Posterior vena cava (tissue), 2 donors: ENCODE measurements at regions of chr17 and their contacts with region 1.

Region 1: DNA sequence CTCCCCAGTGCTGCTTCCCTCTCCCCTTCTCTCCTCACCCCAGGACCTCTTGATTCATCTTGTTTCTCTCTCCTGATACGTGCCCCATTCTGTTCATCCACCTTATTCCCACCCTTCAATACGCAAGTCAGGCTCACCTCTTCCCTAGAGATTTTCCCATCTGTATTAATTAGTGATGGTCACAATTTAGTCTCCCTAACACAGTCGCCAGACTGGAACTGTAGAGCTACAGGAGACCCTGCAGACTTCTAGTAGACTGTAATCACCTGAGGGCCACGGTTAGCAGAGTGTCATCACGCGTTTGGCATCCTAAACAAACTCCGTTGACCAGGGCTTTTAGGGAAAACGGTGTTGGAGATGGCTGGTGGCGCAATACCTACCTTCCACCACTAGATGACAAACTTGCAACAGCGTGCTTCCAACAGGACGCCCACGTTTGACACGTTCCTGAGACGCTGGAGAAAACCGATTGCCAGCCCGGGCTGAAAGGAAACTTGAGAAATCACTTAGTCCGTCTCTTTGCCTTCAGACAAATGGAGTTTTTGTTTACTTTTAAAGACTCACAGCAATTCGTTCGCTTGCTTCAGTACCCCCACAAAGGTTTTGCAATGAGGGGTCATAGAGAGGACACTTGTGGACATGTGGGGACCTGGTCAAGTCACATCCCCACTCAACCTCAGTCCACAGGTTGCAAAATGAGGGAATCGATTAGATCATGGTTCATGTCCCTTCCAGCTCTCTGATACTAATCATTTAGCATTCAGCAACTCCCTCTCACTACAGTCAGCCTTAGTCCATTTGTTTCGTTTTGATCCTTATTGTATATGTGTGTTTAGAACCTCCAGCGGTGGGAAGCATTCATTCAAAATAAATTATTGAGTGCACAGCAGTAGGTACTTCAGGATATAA is 20.6 kb downstream of the MYL4 start:
- DNase-seq: peak; percentile 94

Region 2: DNA sequence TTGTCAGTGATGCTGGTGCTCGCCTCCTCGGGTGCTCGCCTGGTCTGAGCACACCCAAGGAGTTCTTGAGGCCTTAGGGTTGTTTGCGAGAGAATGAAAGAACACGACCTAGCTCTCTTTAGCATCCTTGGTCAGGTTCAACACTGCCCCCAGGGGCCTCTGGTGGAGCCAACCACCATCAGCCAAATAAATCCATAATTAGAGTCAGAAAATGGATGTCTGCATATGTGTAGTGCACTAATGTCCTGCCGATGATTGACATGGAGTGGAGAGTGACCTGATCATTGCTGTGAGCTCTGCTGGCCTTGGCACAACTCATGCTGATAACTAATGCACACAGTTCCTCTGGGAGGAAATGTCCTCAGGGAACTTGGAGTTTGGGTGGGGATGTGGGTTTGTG is 1238.9 kb before region 1 on chr17:
- intact Hi-C with region 1: no loop called
- DNase-seq: peak; percentile 31

Region 3: DNA sequence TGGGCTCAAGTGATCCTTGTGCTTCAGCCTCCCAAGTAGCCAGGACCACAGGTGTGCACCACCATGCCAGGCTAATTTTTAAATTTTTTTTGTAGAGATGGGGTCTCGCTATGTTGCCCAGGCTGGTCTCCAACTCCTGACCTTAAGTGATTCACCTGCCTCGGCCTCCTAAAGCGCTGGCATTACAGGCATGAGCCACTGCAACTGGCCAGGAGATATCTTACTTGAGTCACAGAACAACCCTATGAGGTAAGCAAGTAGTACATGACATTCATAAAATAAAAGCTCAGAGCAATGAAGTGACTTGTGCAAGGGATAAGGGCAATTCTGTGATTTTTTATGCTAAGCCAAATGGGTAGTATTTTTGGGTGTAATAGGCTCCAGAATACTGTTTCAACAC is 98.0 kb before region 1 on chr17:
- intact Hi-C with region 1: no loop called
- DNase-seq: no peak

Region 4: DNA sequence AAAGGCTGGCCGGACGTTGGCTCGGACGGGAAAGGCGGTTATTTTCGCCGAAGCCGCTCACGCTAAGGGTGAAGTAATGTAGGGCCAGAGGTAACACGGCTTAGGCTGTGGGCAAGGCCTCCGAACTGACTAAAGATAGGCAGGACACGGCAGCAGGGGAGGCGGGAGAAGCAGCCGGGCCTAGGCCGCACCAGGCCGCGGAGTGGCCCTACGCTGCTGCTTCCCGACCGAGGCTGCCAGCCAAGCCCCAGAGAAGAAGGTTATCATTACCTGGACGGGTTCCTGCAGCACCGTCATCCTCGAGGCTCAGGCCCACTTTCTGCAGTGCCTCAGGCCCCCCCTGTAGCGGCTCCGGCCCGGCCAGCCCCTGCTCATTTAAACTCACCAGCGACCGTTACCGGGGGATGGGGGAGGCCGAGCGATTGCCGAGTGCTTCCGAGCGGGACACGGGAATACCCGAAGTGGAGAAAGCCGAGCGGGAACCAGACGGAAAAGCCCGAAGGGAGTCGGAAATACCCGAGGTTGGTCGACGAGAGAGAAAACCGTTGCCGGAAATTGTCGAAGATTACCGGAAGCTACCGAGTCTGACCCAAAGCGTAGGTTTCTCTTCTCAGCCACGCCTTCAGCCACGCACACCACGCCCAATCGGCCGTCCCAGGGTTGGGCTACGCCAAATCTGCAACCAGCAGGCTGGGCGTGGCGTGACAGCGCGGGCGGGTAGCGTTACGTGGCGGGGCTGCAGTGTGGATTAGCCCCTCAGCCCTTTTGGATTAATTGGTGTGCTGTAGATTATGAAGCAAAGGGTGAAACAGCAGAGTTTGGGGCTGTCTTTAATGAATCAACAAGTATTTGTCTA is 40.7 kb before region 1 on chr17 and contains the start of gene CDC27:
- intact Hi-C with region 1: loop called in 1 of 2 experiments (anchors 5 kb)
- DNase-seq: peak; percentile 99
- total RNA-seq, gene CDC27: 82.7 to 103 TPM

Region 5: DNA sequence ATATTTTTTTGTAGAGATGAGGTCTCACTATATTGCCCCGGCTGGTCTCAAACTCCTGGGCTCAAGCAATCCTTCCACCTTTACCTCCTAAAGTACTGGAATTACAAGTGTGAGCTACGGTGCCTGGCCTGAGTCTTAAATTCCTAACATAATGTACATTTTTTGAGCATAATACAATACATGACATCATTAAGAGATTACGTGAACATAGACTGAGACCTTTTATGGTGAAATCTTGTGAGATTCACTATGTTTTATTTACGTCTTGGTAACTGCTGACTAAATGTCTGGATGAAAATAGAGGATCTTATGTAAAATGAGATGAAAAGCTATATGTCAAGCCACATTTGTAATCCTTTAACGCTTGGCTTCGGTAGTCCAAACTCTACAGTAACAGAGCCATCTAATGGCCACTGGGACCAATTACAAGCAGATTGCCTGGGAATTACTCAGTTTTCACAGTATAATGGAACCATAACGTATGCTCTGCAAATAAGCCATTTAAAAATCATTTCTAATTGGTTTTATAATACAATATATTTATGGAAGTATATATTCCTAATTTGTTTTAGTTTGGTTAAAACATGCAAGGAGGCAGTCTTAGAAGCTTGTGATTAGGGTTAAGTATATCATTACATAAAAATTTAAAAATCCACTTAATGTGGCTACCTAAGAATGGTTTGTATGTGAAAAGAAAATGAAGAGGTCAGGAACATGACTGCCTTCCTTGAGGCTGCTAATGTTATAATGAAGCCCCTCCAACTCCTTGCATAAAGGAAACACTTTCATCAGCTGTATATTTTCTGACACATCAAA is 85.9 kb after region 1 on chr17:
- intact Hi-C with region 1: loop called (anchors 2 to 5 kb)
- DNase-seq: no peak

Region 6: DNA sequence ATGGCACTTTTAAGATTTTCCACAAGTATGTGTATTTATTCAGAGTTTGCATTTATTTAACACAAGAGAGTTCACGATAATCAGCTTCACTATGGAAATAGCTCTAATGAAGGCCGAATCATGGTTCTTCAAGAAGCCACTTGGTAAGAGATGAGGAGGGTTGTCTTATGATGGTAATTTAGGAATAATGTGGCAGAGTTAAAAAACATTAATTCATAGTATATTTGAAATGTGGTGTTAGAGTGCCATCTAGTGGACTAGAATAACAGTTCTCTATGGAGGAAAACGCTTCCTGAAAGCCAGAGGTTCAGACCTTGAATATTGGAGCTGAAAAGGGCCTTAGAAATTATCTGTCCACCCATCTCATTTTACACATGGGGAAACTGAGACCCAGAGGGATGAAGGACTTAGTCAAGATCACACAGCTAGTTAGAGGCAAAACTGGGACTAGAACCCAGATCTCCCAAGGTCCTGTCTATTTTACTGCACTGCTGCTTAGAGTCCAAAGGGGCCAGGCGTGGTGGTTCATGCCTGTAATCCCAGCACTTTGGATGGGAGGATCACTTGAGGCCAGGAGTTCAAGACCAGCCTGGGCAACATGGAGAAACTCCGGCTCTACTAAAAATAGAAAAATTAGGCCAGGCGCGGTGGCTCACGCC is 386.1 kb after region 1 on chr17:
- intact Hi-C with region 1: loop called in 1 of 2 experiments (anchors 10 kb)
- DNase-seq: no peak

Region 7: GRCh38 chr17:47810205-47810821 is 580.5 kb after region 1 on chr17:
- intact Hi-C with region 1: no loop called
- DNase-seq: peak; percentile 66